ENCODE measurements at regions of chr1 and their contacts with region 1.

Region 1: DNA sequence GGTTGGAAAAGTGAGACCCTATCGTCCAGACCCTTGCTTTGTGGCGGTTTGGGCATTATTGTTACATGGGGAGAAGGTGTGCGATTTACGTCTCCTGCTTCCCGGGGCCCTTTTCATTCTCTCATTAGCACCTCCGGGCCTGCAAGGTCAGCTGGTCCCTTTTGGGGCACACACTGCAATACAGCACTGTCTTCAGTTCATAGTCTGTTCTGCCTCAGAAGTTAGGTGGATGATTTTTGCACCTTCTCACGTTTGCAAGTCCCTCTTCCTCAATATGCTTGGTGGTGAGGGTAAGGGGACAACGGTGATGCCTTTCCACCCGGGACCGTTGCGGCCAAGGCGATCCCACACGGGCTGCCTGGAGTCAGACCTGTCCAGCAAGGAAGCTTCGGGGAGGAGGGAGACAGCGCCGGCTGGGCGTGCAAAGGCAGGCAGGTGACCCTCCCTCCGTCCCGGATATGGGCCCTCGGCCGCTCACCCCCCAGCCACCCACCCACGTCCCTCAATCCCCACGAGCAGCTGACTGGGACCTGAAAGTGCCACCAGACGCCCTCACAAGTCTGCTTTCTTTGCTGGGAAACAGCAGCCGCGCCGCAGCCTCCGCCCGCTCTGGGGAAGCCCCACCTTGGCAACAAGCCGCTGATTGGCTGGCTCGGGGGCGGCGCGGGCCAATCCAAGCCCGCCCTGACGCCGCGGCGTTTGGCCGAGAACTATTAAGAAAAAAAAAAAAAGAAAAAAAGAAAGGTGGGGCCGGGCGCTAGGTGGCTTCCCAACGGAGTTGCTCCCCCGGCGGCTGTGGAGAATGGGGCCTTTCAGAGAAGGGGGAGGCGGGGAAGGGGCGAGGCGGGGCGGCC is 21.7 kb downstream of the BTG2 start:
- DNase-seq: peak; percentile 95
- ATAC-seq: peak; percentile 92
- H3K4me3 Mint-ChIP-seq: peak overlapping the region; percentile 73
- H3K27ac Mint-ChIP-seq: peak overlapping the region; percentile 93
- H3K4me1 Mint-ChIP-seq: peaks cover 66% of the 10 kb centered on the region
- H3K27me3 Mint-ChIP-seq: peaks cover 2% of the 10 kb centered on the region

Region 2: DNA sequence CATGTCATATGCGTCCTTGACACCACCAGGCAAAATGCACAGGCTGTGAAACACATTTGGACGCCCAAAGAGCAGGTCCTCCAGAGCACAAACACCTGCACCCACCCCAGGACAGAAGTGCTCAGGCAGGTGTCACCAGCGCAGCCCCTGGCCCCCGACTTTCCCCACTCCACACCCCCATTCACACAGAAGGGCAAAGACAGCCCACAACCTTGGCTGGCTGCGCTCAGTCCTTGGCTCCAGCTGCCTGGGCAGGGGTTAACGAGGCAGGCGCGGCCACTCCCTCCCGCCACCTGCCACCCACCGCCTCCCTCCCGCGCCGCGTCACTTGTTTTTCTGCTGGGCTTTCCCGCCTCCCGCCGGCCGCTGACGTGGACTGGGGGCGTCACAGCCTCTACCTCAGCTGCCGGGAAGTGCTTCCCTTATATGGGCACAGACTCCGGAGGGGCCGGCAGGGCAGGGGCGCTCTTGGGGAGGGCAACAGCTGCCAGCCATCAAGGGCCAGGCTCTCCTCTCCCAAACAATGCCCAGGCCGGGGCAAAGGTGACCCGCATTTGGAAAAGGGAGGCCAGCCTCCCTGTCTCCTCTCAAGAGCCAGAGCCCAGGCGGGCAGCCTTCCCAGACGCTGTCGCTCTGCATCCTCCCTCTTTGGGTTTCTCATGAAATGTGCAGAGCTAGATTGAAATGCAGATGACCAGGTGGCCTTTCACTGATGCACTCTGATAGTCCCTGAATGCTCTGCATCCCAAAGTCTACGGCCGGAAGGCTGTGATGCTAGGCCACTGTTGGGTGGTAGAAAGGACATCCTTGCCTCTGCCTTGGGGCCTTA is 36.6 kb before region 1 on chr1:
- CTCF ChIA-PET with region 1: interaction called, 135 read pairs
- POLR2A ChIA-PET with region 1: interaction called, 234 read pairs
- DNase-seq: peak; percentile 97
- ATAC-seq: peak; percentile 51
- H3K4me3 Mint-ChIP-seq: peak overlapping the region; percentile 81
- H3K27ac Mint-ChIP-seq: peak overlapping the region; percentile 99
- H3K4me1 Mint-ChIP-seq: peaks cover 86% of the 10 kb centered on the region
- H3K27me3 Mint-ChIP-seq: no peaks in the 10 kb centered on the region

Region 3: DNA sequence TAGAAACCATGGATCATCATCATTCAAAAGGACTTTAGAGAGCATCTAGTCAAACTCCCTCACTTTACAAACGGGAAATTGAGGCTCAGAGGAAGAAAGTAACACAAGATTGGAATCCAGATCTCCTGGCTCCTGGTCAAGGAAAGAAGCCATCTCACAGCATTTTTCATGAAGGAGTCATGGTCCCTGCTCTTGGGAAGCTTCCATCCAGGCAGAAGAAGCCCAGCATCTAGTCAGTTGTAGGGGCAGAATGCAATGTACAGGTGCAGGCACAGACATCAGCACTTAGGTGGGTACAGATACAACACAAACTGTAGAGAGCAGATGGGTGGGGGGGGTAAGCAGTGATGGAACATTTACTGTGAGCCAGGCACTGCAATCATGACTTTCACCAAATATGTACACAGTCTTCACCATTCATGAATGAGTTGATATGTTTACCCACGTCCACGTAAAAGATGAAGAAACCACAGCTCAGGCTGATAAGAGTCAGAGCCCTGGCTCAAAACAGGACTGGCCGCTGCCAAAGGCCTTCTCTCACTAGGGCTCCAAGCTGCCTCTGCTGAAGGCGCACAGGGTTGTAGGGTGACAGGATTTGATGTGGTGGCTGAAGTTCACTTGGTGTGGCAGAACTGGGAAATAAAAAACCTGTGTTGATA is 210.9 kb after region 1 on chr1:
- CTCF ChIA-PET with region 1: no interaction called
- POLR2A ChIA-PET with region 1: no interaction called
- DNase-seq: no peak
- ATAC-seq: no peak
- H3K4me3 Mint-ChIP-seq: no peak overlapping the region
- H3K27ac Mint-ChIP-seq: no peak overlapping the region
- H3K4me1 Mint-ChIP-seq: no peaks in the 10 kb centered on the region
- H3K27me3 Mint-ChIP-seq: peaks cover 10% of the 10 kb centered on the region